Motor neuron (in vitro differentiated cells): ENCODE measurements at regions of chr7 and their contacts with region 1.

Region 1: GRCh38 chr7:39894904-39895303 is 55.2 kb upstream of the CDK13 start:
- ATAC-seq: no peak
- H3K4me3 ChIP-seq: no peak overlapping the region
- H3K27ac ChIP-seq: no peak overlapping the region
- H3K4me1 ChIP-seq: no peaks in the 10 kb centered on the region

Region 2: GRCh38 chr7:40057292-40057691 is 162.4 kb after region 1 on chr7:
- in situ Hi-C with region 1: loop called in 2 of 9 experiments (anchors 10 kb)
- ATAC-seq: peak in 3 of 8 experiments; percentile 75 to 96 (median 96)
- H3K4me3 ChIP-seq: no peak overlapping the region
- H3K27ac ChIP-seq: no peak overlapping the region
- H3K4me1 ChIP-seq: no peaks in the 10 kb centered on the region

Region 3: DNA sequence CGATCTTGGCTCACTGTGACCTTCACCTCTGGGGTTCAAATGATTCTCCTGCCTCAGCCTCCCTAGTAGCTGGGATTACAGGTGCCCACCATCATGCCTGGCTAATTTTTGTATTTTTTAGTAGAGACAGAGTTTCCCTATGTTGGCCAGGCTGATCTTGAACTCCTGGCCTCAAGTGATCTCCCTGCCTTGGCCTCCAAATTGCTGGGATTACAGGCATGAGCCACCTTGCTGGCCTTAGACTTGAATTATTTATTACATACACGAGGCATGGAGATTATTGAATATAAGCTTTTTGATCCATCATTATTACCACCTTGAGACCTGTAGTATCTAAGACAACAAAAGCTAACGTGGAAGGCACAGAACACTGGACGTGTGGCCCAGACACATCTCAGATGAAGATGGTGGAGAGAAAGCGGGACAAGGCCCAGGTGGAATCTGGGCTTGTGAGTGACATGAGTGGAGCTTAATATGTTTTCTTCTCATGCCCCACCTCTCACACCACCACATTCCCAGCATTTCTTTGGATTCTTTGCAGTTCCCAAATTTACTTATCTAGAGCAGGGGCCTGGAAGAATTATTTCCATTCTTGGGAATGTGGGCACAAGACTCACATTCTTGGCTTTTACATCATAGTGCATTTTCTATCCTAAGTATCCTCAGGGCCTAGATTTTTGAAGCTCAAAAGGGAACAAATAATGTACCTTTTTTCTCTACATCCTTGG is 316.5 kb after region 1 on chr7:
- in situ Hi-C with region 1: no loop called
- ATAC-seq: no peak
- H3K4me3 ChIP-seq: no peak overlapping the region
- H3K27ac ChIP-seq: no peak overlapping the region
- H3K4me1 ChIP-seq: no peaks in the 10 kb centered on the region